ENCODE measurements at regions of chr10 and their contacts with region 1.

Region 1: DNA sequence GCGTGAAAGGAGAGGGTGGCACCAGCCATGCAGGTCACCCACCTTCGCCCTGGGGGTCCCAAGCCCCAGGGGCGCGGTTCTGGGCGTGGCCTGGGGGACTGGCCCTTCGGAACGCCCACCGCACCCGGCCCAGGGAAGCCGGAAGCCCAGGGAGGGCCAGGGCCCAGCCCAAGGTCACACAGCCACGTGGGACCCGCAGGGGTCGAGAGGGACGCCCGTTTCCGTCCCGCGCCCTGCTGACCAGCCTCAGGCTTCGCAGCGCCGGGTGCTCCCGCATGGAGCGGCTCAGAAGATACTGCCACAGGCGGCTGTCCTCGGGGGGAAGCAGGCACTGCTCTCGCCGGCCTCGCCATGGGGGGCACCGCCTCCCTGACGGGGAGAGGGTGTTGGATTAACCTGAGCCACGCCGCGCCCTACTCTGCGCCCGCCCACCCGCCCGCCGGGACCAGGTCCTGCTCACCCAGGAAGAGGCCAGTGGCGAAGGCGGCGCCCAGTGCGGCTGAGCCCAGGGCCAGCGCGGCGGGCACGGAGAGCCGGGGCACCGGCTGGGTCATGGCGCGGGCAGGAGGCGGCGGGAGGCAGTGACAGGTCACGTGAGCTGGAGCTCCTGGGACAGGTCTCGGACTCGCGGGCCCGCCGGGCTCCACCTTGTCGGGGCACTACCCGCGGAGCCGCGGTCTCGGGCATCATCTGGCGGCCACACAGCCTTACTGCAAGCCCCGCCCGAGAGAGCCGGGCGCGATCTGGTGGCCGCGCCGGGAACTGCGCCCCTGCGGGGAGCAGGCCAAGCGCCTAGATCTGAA is at the start of gene COMTD1:
- DNase-seq: peak; percentile 95
- ATAC-seq: peak; percentile 65
- total RNA-seq, gene COMTD1: 81.7 to 82.4 TPM

Region 2: DNA sequence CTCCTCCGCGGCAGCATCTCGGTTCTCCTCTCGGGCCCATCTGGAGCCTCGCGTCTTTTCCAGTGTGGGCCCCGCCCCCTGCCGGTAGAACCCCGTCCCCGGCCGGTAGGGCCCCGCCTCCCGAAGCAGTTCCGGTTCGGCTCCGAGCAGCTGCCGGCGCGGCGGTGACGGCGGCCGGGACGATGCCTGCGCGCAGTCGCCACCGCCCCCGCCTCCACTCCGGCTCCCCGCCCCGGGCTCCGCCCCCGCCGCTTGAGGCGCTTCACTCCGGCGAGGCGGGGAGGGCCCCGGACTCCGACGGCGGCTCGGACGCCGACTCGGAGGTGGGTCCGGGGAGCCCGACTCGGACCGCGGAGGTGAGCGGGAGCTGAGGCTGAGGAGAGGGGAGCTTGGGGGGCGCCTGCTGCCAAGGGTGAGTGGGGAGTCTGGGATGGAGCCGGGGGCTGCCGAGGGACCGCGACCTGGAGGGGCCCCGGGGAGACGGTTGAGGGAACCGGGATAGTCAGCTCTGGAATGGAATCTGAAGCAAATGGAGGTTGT is 124.1 kb before region 1 on chr10 and contains the start of gene SAMD8:
- intact Hi-C with region 1: loop called in 1 of 2 experiments (anchors 5 kb)
- DNase-seq: peak; percentile 97 to 98
- ATAC-seq: peak; percentile 89
- total RNA-seq, gene SAMD8: 12.0 to 20.3 TPM

Region 3: GRCh38 chr10:75187961-75188426 is 47.6 kb before region 1 on chr10:
- intact Hi-C with region 1: loop called in 1 of 2 experiments (anchors 10 kb)
- DNase-seq: peak; percentile 53 to 66
- ATAC-seq: peak; percentile 71